PC-9 (cell line): ENCODE measurements at regions of chr12 and their contacts with region 1.

Region 1: DNA sequence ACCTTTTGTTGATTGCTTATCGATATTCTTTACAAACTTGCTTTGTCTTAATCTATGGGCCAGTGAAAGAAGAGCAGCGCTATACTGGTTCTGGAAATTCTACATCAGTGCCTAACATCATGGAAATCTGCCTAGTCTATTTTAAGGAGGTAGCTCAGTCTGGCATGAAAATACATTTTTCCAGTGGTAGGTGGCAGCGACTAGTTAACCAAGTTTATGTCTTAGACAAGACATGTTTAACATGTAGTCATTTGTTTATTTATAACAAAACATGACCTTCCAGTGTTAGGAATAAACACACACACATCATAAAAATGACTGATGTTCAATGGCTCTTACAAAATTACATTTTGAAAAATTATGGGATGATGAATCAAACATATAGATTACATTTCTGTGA is 336.0 kb upstream of the SOX5 start:
- DNase-seq: no peak
- H3K4me3 ChIP-seq: no peak overlapping the region
- H3K27ac ChIP-seq: no peak overlapping the region
- H3K4me1 ChIP-seq: no peaks in the 10 kb centered on the region
- H3K27me3 ChIP-seq: peaks cover 19% of the 10 kb centered on the region
- CTCF ChIP-seq: no peak

Region 2: GRCh38 chr12:24102676-24103075 is 182.8 kb before region 1 on chr12:
- CTCF ChIA-PET with region 1: no interaction called
- POLR2A ChIA-PET with region 1: no interaction called
- intact Hi-C with region 1: no loop called
- DNase-seq: no peak
- H3K4me3 ChIP-seq: no peak overlapping the region
- H3K27ac ChIP-seq: no peak overlapping the region
- H3K4me1 ChIP-seq: no peaks in the 10 kb centered on the region
- H3K27me3 ChIP-seq: no peaks in the 10 kb centered on the region
- CTCF ChIP-seq: no peak

Region 3: DNA sequence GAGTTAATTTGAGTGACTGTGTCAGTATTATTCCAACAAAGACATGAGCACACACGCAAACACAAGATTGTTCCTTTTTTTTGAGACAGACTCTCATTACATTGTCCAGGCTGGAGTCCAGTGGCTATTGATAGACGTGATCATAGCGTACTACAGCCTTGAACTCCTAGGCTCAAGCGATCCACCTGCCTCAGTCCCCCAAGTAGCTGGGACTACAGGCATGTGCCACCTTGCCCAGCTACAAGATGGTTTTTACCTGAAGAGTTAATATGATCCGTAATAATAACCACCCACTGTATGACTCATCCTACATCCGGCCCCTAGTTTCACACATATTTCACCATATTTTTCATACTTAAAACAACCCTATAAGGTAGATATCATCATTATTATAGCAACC is 636.6 kb after region 1 on chr12:
- CTCF ChIA-PET with region 1: interaction called, 16 read pairs
- POLR2A ChIA-PET with region 1: no interaction called
- intact Hi-C with region 1: no loop called
- DNase-seq: no peak
- H3K4me3 ChIP-seq: no peak overlapping the region
- H3K27ac ChIP-seq: peak overlapping the region; percentile 33; the same call in 1 of the 2 replicates
- H3K4me1 ChIP-seq: 0 out of 2 replicates have a peak, but pooled peaks cover 4% of the 10 kb centered on the region
- H3K27me3 ChIP-seq: no peaks in the 10 kb centered on the region
- CTCF ChIP-seq: no peak